GM10248 (cell line): ENCODE measurements at regions of chr17 and their contacts with region 1.

Region 1: DNA sequence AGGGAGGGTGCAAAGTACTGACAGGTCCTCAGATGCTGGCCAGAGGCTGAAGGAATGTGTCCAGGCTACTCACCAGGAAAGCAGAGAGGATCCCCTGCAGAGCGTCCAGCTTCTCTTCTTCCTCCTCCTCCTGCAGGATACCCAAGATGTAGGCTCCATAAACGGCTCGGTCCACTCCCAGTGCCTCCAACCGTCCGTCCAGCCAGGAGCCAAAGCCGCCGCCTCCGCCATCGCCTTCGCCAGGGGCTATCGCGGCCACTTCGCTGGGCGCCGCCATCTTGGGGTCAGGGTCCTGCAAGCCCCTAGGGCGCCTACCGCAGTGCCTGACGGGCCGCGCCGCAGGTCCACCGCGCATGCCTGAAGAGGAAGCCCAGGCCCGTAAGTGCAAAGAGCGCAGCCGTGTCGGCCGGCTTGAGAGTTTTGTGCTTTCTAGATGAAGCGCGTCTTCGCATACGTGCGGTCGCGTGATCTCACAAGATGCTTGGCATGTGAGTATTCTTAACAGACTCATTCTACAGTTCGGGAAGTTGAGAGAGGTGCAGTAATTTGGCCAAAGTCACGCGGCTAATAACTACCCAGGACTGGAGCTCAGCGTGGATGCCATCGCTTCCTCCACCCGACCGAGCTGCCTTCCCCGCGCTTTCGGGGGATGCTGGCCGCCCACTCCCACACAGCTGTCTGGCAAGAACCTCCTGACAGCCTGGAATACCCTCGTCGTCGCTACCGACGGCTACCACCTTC is at the start of gene CCDC43:
- DNase-seq: peak; percentile 95
- CTCF ChIP-seq: no peak

Region 2: DNA sequence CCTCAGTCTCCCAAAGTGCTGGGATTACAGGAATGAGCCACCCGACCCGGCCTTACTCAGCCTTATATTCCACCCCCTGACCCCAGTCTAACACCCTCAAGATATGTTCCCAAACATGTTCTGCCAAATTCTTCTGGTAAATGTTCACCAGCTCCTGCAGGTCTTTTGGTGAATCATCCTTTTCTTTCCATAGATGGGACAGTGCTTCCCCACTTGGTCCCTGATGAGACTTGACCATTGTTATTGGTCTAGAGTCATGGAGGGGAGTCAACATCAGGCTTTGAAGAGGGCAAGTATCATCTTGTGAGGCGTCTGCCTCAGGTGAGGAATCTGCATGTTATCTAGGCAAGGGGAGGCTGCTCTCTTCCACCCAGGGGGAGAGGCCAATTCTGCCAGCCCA is 391.7 kb before region 1 on chr17:
- CTCF ChIA-PET with region 1: no interaction called
- POLR2A ChIA-PET with region 1: no interaction called
- DNase-seq: no peak
- CTCF ChIP-seq: no peak

Region 3: DNA sequence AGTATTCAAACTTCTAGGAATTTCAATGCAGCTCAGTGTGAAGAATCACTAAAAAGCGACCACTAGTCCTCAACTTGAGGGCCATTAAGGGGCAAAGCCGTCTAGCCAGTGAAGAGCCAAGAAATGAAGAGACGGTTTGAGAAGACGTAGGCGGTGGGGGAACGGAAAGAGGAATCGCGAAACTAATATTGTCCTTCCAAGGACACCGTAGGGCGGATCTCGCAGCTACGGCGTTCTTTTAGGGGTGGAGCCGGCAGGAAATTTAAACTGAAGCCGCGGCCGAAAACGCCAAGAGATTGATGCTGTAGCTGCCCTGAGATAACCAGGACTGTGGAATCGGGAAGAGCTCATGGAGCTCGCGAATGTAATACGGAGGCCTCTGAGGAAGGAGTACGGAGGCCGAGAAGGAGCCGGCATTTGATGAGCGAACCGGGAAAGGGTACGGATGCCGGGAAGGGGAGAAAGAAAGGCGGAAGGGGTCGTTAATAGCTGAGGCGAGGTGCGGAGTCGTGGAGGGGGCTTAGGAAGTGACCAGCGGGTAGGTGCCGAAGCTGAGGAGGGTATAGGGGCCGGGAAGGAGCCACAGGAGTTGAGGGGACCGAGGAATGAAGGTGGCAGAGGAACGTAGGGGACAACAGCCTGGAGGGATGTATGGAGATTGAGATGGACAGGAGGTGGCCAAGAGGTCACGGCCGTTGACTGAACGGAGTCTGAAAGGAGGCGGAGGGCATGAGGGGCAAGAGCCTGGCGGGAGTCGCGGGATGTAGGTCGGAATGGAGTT is 18.9 kb after region 1 on chr17 and contains the start of gene DBF4B:
- CTCF ChIA-PET with region 1: interaction called, 8 read pairs
- POLR2A ChIA-PET with region 1: interaction called, 13 read pairs
- DNase-seq: peak; percentile 90
- CTCF ChIP-seq: no peak

Region 4: GRCh38 chr17:44749076-44749979 is 59.7 kb after region 1 on chr17:
- CTCF ChIA-PET with region 1: no interaction called
- POLR2A ChIA-PET with region 1: no interaction called
- DNase-seq: no peak
- CTCF ChIP-seq: no peak